Lower leg skin (tissue), 4 donors: ENCODE measurements at regions of chr11 and their contacts with region 1.

Region 1: DNA sequence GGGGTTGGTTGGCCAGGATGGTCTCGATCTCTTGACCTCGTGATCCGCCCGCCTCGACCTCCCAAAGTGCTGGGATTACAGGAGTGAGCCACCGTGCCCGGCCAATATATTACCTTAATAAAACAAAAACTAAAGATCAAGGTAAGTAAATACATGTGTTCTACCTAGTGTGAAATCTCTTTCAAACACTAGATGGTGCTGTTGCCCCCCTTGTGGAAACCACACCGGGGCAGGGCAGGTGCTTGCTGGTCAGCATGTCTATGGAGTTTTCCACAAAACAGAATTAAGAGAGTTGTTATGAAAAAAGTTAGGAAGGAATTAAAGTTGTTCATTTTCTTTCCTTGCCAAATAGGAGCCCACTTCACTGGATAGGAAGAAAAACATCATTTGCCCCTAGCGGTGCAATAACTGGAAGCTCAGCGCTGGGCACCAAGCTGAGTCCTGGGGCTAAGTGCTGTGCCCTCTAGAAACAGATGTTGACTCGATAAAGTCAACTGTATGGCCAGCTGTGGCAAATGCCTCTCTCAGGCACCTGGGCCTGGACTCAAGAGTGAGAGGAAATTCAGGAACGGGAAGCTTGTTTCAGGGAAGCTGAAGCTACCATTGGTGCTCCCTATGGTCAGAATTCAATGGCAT is 6.3 kb upstream of the KCNJ5 start:
- DNase-seq: peak in 1 of 2 donors; percentile 59
- H3K4me3 ChIP-seq: no peak overlapping the region
- CTCF ChIP-seq: peak in 1 of 3 donors; percentile 36
- POLR2A ChIP-seq: no peak

Region 2: GRCh38 chr11:128956401-128957201 is 71.8 kb after region 1 on chr11:
- intact Hi-C with region 1: loop called (anchors 5 kb)
- DNase-seq: no peak
- H3K4me3 ChIP-seq: no peak overlapping the region
- CTCF ChIP-seq: peak in 1 of 3 donors; percentile 45
- POLR2A ChIP-seq: no peak